Heart right ventricle (tissue), 16 donors: ENCODE measurements at regions of chr17 and their contacts with region 1.

Region 1: GRCh38 chr17:57671667-57672632 is 73.1 kb downstream of the CCDC182 start:
- DNase-seq: peak; percentile 77 to 81
- ATAC-seq: peak; percentile 89 to 96 (median 92)
- H3K4me3 ChIP-seq: no peak overlapping the region
- H3K27ac ChIP-seq: peak overlapping the region in 5 of 10 donors; percentile 20 to 52 (median 26)
- H3K4me1 ChIP-seq: peaks cover 0 to 37% (median 10%) of the 10 kb centered on the region in 9 donors
- H3K27me3 ChIP-seq: no peaks in the 10 kb centered on the region
- CTCF ChIP-seq: peak; percentile 80 to 98 (median 97)

Region 2: DNA sequence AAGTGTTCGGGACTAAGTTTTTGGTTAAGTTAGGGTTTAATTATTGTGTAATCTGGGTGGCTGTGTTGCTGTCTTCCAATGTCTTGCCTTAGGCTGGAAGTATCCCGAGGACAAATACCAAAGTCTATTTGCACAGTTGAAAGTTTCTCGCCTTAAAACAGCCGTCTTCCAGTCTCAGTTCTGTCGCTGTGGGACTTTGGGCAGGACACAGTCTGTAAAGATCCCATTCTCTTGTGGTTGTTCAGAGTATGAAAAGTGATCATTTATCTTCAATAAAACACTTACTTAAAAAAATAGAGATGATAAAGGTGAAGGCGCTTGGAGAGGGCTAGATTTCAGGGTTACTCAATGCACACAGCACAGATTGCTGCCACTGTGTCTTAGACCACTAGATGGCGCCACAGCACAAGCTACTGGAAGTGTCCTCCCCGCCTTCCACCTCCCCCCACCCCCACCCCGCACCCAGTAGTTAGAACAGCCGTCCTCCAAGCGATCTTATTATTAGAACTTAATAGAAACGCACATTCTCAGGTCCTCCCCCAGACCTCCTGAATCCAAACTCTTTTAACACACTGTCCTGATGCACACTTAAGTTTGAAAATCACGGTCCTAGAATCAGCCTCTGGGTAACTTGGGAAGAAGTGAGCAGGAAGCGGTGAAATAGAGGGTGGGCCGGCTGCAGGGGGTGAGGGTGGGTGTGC is 541.0 kb before region 1 on chr17:
- intact Hi-C with region 1: loop called in 4 of 10 experiments (anchors 5 to 10 kb)
- DNase-seq: peak; percentile 76 to 88
- ATAC-seq: peak; percentile 91 to 96 (median 94)
- H3K4me3 ChIP-seq: peak overlapping the region in 1 of 10 donors; percentile 11
- H3K27ac ChIP-seq: no peak overlapping the region
- H3K4me1 ChIP-seq: peaks cover 0 to 5% (median 0%) of the 10 kb centered on the region in 9 donors
- H3K27me3 ChIP-seq: no peaks in the 10 kb centered on the region
- CTCF ChIP-seq: peak; percentile 80 to 95 (median 91)

Region 3: GRCh38 chr17:57284984-57285646 is 386.8 kb before region 1 on chr17:
- intact Hi-C with region 1: loop called in 1 of 10 experiments (anchors 10 kb)
- DNase-seq: no peak
- ATAC-seq: no peak
- H3K4me3 ChIP-seq: no peak overlapping the region
- H3K27ac ChIP-seq: peak overlapping the region in 3 of 10 donors; percentile 1 to 47 (median 15)
- H3K4me1 ChIP-seq: peaks cover 8 to 78% (median 62%) of the 10 kb centered on the region in 9 donors
- H3K27me3 ChIP-seq: no peaks in the 10 kb centered on the region
- CTCF ChIP-seq: no peak

Region 4: GRCh38 chr17:57597531-57598453 is 74.2 kb before region 1 on chr17:
- intact Hi-C with region 1: loop called (anchors 1 to 5 kb)
- DNase-seq: peak; percentile 57 to 81
- ATAC-seq: peak in 7 of 8 donors; percentile 39 to 80 (median 71)
- H3K4me3 ChIP-seq: no peak overlapping the region
- H3K27ac ChIP-seq: peak overlapping the region in 8 of 10 donors; percentile 5 to 65 (median 58)
- H3K4me1 ChIP-seq: peaks cover 0 to 57% (median 34%) of the 10 kb centered on the region in 9 donors
- H3K27me3 ChIP-seq: no peaks in the 10 kb centered on the region
- CTCF ChIP-seq: peak; percentile 67 to 93 (median 85)

Region 5: DNA sequence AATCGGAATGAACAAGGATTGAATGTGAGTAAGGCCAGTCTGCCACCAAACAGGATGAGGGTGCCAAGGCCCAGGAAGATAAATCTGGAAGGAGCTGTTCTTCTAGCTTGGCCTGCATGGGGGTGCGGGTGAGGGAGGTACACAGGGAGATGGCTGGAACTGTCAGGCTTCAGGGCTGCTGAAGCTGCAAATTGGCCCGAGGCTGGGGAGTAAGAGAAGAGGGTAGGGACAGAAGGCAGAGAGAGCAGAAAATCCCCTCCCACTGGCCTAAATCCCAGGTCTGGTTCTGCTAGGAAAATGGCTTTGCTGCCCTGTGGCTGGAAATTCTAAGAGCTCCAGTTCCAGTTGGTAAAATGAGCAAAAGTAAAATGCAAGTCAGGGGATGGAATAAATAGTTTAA is 14.7 kb before region 1 on chr17:
- intact Hi-C with region 1: no loop called
- DNase-seq: no peak
- ATAC-seq: no peak
- H3K4me3 ChIP-seq: no peak overlapping the region
- H3K27ac ChIP-seq: no peak overlapping the region
- H3K4me1 ChIP-seq: peaks cover 0 to 11% (median 6%) of the 10 kb centered on the region in 9 donors
- H3K27me3 ChIP-seq: no peaks in the 10 kb centered on the region
- CTCF ChIP-seq: no peak

Region 6: GRCh38 chr17:57747221-57748017 is 75.5 kb after region 1 on chr17:
- intact Hi-C with region 1: loop called in 1 of 10 experiments (anchors 10 kb)
- DNase-seq: peak in 1 of 2 donors; percentile 28
- ATAC-seq: peak in 7 of 8 donors; percentile 32 to 75 (median 56)
- H3K4me3 ChIP-seq: no peak overlapping the region
- H3K27ac ChIP-seq: no peak overlapping the region
- H3K4me1 ChIP-seq: peaks cover 0 to 11% (median 0%) of the 10 kb centered on the region in 9 donors
- H3K27me3 ChIP-seq: no peaks in the 10 kb centered on the region
- CTCF ChIP-seq: peak; percentile 42 to 87 (median 77)